ENCODE measurements at regions of chr15 and their contacts with region 1.

Region 1: GRCh38 chr15:56160966-56161365 is 82.7 kb downstream of the RFX7 start:
- DNase-seq: peak; percentile 14
- ATAC-seq: no peak
- H3K4me3 ChIP-seq: no peak overlapping the region
- H3K27ac ChIP-seq: no peak overlapping the region; the same call in 1 of the 2 replicates
- H3K4me1 ChIP-seq: peaks cover 8% of the 10 kb centered on the region
- H3K27me3 ChIP-seq: no peaks in the 10 kb centered on the region
- CTCF ChIP-seq: no peak
- POLR2A ChIP-seq: no peak
- RAD21 ChIP-seq: no peak

Region 2: DNA sequence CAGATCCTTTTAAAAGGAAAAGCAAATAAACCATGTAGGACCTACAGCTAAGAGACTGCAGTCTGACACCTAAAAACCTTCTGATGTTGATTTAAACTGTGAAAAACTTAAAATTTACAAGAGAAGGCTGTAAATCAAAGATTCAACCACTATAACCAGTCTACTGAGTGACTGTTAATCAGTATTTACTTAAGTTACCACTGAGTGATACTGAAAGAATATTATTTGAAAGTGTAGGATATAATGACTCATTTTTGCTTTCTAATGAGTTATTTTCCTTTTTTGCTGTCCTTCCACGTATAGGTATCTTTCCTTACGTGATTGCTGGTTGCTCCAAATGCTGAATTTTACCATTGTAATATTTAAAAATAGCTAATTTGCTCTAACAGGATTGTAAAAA is 38.1 kb after region 1 on chr15:
- CTCF ChIA-PET with region 1: no interaction called
- POLR2A ChIA-PET with region 1: no interaction called
- dilution Hi-C with region 1: no loop called
- in situ Hi-C with region 1: no loop called
- intact Hi-C with region 1: loop called (anchors 5 kb)
- DNase-seq: no peak
- ATAC-seq: no peak
- H3K4me3 ChIP-seq: no peak overlapping the region
- H3K27ac ChIP-seq: no peak overlapping the region
- H3K4me1 ChIP-seq: peaks cover 2% of the 10 kb centered on the region; the same call in 1 of the 2 replicates
- H3K27me3 ChIP-seq: no peaks in the 10 kb centered on the region
- CTCF ChIP-seq: no peak
- POLR2A ChIP-seq: no peak
- RAD21 ChIP-seq: no peak